ENCODE measurements at regions of chr5 and their contacts with region 1.

Region 1: DNA sequence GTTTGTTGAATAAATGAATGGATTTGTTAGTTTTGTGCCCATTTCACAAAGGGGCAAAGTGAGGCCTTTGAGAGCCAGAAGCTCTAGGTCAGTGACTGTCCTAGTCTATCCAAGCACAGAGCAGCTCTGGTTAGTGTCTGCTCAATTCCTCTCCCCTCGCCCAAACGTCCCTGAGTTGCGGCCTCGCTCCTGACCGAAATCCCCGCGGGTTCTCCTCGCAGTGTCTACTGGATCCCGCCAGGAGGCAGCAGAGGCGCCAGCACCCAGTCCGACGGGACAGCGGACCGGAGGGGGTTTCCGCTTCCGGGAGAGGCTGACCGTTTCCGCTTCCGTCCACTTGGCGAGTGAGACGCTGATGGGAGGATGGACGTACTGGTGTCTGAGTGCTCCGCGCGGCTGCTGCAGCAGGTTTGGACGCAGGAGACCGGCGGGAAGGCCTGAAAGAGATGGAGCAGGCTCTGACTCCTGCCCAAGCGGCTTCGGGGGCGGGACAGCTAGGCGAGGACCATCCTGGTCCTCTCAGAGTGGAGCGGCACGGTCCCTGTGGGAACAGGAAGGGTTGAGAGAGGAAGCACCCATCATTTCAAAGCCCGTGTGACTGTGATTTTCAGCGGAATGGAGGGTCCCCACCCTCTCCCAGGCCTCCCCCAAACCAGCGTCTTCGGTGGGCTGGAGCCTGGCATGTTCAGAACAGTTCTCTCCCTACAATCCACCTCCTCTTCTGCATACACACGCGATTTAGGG is at the start of gene RARS1:
- DNase-seq: peak; percentile 96
- H3K4me3 Mint-ChIP-seq: peak within 1 kb of the TSS; percentile 95
- H3K27ac Mint-ChIP-seq: peak within 1 kb of the TSS; percentile 87
- H3K4me1 Mint-ChIP-seq: peaks cover 19% of the 10 kb centered on the region
- H3K27me3 Mint-ChIP-seq: no peaks in the 10 kb centered on the region
- CTCF ChIP-seq: peak; percentile 97
- total RNA-seq, gene RARS1: 120 and 127 TPM in 2 replicates

Region 2: DNA sequence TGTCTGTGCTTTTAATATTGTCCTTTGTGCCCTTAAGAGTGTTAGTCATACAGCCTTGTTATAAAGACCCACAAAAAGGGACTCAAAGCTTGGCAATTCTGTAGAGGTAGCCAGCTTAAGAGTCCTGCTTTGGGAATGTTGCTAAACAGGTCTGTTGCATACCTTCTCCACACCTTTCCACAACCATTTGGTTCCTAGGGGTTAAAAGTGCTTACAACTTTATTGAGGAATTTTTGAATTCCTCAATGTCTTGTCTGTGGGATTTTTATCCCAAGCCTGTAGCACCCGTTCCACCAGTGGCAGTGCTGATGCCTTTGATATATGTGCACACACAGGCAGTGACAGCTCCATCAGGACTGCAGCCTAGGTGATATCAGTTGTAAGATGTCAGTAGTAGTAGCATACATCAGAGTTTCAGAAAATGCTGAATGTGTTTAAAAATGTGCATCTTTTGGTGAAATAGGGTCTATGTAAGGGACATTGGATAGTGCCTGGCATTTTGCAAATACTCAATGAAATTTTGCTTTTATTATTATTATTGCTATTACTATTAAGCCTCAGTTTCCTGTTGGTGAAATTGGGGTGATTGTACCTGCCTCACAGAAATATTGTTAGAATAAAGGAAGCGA is 126.4 kb before region 1 on chr5:
- CTCF ChIA-PET with region 1: interaction called, 13 read pairs
- POLR2A ChIA-PET with region 1: no interaction called
- intact Hi-C with region 1: no loop called
- DNase-seq: no peak
- H3K4me3 Mint-ChIP-seq: no peak overlapping the region
- H3K27ac Mint-ChIP-seq: no peak overlapping the region
- H3K4me1 Mint-ChIP-seq: peaks cover 17% of the 10 kb centered on the region
- H3K27me3 Mint-ChIP-seq: no peaks in the 10 kb centered on the region
- CTCF ChIP-seq: no peak

Region 3: GRCh38 chr5:168390491-168390890 is 95.8 kb before region 1 on chr5:
- CTCF ChIA-PET with region 1: no interaction called
- POLR2A ChIA-PET with region 1: no interaction called
- intact Hi-C with region 1: no loop called
- DNase-seq: peak; percentile 28
- H3K4me3 Mint-ChIP-seq: no peak overlapping the region
- H3K27ac Mint-ChIP-seq: peak overlapping the region; percentile 66
- H3K4me1 Mint-ChIP-seq: peaks cover 7% of the 10 kb centered on the region
- H3K27me3 Mint-ChIP-seq: no peaks in the 10 kb centered on the region
- CTCF ChIP-seq: no peak

Region 4: DNA sequence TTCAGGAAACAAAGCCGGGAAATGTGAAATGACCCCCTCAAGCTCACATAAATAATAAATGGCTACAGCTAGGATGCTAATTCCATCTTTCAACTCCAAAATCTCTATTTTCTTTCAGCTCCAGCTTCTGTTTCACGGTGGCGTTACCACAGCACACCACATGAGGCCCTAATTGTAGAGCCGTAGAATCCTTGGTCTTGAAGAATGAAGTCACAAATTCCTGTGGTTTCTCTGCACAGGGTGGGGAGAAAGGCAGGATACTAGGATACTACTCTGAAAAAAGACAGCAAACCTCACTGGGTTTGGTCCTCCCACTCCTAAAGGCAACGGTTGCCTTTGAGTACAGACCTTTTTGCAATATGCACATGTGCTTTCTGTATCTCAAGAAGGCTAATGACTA is 14.0 kb before region 1 on chr5:
- CTCF ChIA-PET with region 1: interaction called, 33 read pairs
- POLR2A ChIA-PET with region 1: interaction called, 7 read pairs
- intact Hi-C with region 1: loop called (anchors 1 kb)
- DNase-seq: peak; percentile 78
- H3K4me3 Mint-ChIP-seq: no peak overlapping the region
- H3K27ac Mint-ChIP-seq: peak overlapping the region; percentile 6
- H3K4me1 Mint-ChIP-seq: peaks cover 15% of the 10 kb centered on the region
- H3K27me3 Mint-ChIP-seq: no peaks in the 10 kb centered on the region
- CTCF ChIP-seq: peak; percentile 60

Region 5: GRCh38 chr5:168502563-168503237 is 16.4 kb after region 1 on chr5:
- CTCF ChIA-PET with region 1: interaction called, 11 read pairs
- POLR2A ChIA-PET with region 1: interaction called, 43 read pairs
- intact Hi-C with region 1: no loop called
- DNase-seq: no peak
- H3K4me3 Mint-ChIP-seq: no peak overlapping the region
- H3K27ac Mint-ChIP-seq: no peak overlapping the region
- H3K4me1 Mint-ChIP-seq: no peaks in the 10 kb centered on the region
- H3K27me3 Mint-ChIP-seq: no peaks in the 10 kb centered on the region
- CTCF ChIP-seq: no peak

Region 6: GRCh38 chr5:168647083-168647482 is 160.8 kb after region 1 on chr5:
- CTCF ChIA-PET with region 1: interaction called, 6 read pairs
- POLR2A ChIA-PET with region 1: interaction called, 16 read pairs
- intact Hi-C with region 1: loop called (anchors 5 kb)
- DNase-seq: peak; percentile 99
- H3K4me3 Mint-ChIP-seq: peak overlapping the region; percentile 25
- H3K27ac Mint-ChIP-seq: peak overlapping the region; percentile 93
- H3K4me1 Mint-ChIP-seq: peaks cover 44% of the 10 kb centered on the region
- H3K27me3 Mint-ChIP-seq: no peaks in the 10 kb centered on the region
- CTCF ChIP-seq: no peak

Region 7: DNA sequence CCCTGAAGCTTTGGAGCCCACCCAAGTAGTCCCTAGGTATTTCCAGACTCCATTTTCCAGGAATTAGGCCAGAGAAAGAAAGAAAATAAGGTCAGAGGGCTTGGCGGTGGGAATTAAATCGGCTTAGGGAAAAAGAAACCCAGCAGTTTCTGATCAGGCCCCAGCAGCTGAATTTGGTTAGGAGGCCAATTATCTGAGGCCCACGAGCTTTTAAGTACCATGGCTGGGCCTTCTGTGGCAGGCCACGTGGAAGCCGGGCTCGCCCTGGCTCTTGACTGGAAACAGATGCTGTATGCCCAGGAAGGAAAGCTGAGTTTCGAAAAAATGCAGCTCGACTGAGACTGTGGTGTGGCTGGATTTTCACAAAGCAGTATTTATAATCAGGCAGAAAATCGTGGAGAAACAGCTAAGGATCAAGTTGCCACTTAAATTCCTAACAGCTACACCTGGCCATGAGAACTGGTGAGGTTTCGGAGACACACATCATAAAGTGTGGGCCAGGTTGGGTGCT is 168.0 kb after region 1 on chr5:
- CTCF ChIA-PET with region 1: interaction called, 5 read pairs
- POLR2A ChIA-PET with region 1: interaction called, 13 read pairs
- intact Hi-C with region 1: loop called (anchors 5 kb)
- DNase-seq: no peak
- H3K4me3 Mint-ChIP-seq: no peak overlapping the region
- H3K27ac Mint-ChIP-seq: no peak overlapping the region
- H3K4me1 Mint-ChIP-seq: peaks cover 44% of the 10 kb centered on the region
- H3K27me3 Mint-ChIP-seq: no peaks in the 10 kb centered on the region
- CTCF ChIP-seq: no peak

Region 8: DNA sequence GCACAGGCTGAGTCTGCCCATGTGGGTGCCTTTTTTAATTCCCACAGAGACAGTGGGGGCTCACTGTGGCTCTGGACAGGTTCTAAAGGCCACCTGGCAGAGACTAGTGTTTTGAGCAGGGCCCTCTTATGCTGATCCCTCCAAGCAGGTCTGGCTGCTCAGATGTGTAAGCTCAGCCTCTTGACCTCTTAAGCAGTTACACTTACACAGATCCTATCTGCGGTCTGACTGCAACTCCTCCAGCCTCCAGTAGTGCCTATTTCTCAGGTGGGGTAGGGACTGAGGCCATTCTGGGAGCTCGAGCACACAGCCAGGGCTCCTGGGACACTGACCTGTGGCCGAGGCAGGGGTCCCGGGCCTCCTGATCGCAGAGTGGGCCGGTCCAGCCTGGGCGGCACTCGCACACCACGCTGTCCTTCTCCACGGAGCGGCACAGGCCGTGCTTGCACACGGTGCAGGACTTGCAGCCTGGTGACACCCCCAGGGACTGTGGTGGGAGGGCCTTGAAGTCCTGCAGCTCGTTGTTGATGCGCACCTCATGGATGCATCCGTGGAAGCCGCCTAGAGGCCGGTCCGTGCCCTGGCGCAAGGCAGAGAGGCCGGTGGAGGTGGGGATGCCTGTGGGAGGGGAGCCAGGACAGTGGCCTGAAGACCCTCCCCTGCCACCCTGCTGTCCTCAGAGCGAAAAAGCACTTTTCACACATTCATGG is 184.7 kb after region 1 on chr5:
- CTCF ChIA-PET with region 1: interaction called, 3 read pairs
- POLR2A ChIA-PET with region 1: no interaction called
- intact Hi-C with region 1: loop called (anchors 5 kb)
- DNase-seq: no peak
- H3K4me3 Mint-ChIP-seq: no peak overlapping the region
- H3K27ac Mint-ChIP-seq: no peak overlapping the region
- H3K4me1 Mint-ChIP-seq: no peaks in the 10 kb centered on the region
- H3K27me3 Mint-ChIP-seq: no peaks in the 10 kb centered on the region
- CTCF ChIP-seq: no peak

Region 9: GRCh38 chr5:168822745-168823281 is 336.5 kb after region 1 on chr5:
- CTCF ChIA-PET with region 1: no interaction called
- POLR2A ChIA-PET with region 1: no interaction called
- intact Hi-C with region 1: no loop called
- DNase-seq: peak; percentile 60
- H3K4me3 Mint-ChIP-seq: no peak overlapping the region
- H3K27ac Mint-ChIP-seq: no peak overlapping the region
- H3K4me1 Mint-ChIP-seq: no peaks in the 10 kb centered on the region
- H3K27me3 Mint-ChIP-seq: no peaks in the 10 kb centered on the region
- CTCF ChIP-seq: no peak

Measured in MCF 10A (cell line).